Activated T-helper 2 cell treated with anti-CD3 and anti-CD28 coated beads, Interferon-gamma antibody, Interleukin-2, Interleukin-4, amounts not matched to agents 10 μg/mL and 5 μg/mL and 100 μg/mL, durations not matched to agents 14 hours and 24 hours and 36 hours (primary cell): ENCODE measurements at regions of chr18 and their contacts with region 1.

Region 1: DNA sequence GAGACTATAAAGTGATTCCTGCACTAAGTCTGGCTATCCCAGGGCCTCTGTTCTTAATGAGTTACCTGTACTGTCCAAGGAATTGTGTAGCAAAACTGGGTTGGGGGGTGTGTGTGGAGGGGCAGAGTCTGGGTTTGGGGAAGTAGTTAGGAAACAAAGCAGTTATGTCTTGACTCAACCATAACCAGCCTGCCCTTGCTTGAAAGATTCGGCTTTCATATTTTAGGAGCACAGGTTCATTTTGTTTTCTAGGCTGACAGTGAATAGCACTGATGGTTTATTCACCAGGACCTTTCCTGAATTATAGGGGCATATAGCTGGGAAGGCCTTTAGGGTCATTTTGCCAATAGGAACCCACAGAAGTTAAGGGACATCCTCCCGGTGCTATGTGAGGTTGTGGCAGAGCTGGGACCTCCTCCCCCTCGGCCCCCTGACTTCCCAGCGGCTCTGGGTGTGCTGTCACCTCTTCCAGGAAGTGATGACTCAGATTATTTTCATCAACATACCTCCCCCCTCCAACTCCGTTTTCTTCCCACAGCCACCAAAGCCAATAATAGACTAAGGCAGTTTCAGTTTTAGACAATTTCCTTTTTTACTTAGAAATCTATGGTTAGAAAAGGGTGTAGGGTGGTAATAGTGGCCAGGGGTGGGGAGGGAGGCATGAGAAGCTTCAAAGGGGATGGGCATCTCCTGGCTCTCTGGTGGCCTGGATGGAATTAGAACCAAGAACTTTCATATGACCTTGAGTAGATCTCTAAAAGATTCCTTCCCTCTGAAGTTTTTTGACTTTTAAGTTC is 44.8 kb downstream of the SETBP1 start:
- DNase-seq: peak; percentile 66
- H3K4me3 Mint-ChIP-seq: peak overlapping the region; percentile 19
- H3K27ac Mint-ChIP-seq: peak overlapping the region; percentile 83
- H3K4me1 Mint-ChIP-seq: peaks cover 90% of the 10 kb centered on the region
- H3K27me3 Mint-ChIP-seq: no peaks in the 10 kb centered on the region

Region 2: GRCh38 chr18:44702594-44702993 is 22.9 kb before region 1 on chr18:
- intact Hi-C with region 1: loop called (anchors 2 kb)
- DNase-seq: no peak
- H3K4me3 Mint-ChIP-seq: no peak overlapping the region
- H3K27ac Mint-ChIP-seq: no peak overlapping the region
- H3K4me1 Mint-ChIP-seq: peaks cover 20% of the 10 kb centered on the region
- H3K27me3 Mint-ChIP-seq: peaks cover 14% of the 10 kb centered on the region

Region 3: DNA sequence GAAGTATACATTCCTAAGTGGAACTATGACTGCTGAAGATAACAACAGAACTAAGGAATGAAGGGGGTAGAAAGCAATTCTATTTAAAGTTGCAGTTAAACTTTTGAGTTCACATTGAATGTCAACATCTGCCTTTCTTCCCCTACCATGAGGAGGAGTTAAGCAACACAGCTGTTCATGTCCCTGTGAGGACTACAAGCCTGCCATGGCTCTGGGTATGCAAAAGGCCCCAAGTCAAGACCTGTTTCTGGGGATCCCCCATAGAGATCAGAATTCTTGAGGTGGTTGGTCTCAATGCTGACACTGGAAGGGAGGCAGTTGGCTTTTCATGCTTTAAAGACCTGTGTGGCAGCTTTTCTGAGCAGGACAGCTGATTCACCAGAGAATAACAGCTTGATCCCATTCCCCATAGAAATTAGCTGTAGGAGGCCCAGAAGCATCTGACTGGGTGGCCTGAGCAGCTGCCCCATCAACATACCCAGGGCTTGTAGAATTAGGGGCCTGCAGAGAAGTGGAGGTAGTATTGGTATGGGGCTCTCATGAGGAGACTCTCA is 86.2 kb after region 1 on chr18:
- intact Hi-C with region 1: no loop called
- DNase-seq: no peak
- H3K4me3 Mint-ChIP-seq: no peak overlapping the region
- H3K27ac Mint-ChIP-seq: no peak overlapping the region
- H3K4me1 Mint-ChIP-seq: peaks cover 10% of the 10 kb centered on the region
- H3K27me3 Mint-ChIP-seq: peaks cover 4% of the 10 kb centered on the region

Region 4: DNA sequence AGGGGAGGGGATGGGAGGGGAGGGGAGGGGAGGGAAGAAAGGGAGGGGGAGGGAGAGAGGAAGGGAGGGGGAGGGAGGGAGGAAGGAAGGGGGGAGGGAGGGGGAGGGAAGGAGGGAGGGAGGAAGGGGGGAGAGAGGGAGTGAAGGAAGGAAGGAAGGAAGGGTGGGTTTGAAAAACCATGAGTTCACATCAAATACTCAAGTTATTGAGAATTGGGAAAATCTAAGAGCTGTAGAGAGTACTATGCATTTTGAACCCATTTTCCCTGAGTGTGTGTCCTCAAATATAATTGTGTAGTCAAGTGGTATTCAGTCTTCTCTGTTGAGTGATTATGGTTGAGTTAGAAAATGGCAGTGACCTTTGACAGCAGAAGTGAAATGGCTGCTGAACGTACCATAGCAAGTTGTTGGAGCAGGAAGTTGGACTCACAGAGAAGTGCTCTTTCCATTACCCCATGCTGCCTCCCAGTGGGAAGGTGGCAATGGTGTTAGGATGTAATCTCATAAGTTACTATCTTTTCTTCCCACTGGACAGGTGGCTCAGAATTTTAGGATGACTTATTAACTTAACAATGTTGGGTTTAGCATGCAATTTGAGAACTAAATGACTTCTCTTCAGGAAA is 169.8 kb after region 1 on chr18:
- intact Hi-C with region 1: loop called (anchors 1 kb)
- DNase-seq: peak; percentile 10
- H3K4me3 Mint-ChIP-seq: no peak overlapping the region
- H3K27ac Mint-ChIP-seq: peak overlapping the region; percentile 20
- H3K4me1 Mint-ChIP-seq: peaks cover 49% of the 10 kb centered on the region
- H3K27me3 Mint-ChIP-seq: no peaks in the 10 kb centered on the region

Region 5: GRCh38 chr18:45197526-45197970 is 472.1 kb after region 1 on chr18:
- intact Hi-C with region 1: loop called (anchors 1 kb)
- DNase-seq: no peak
- H3K4me3 Mint-ChIP-seq: no peak overlapping the region
- H3K27ac Mint-ChIP-seq: no peak overlapping the region
- H3K4me1 Mint-ChIP-seq: peaks cover 1% of the 10 kb centered on the region
- H3K27me3 Mint-ChIP-seq: peaks cover 11% of the 10 kb centered on the region